Right ventricle myocardium inferior (tissue), 1 donor: ENCODE measurements at regions of chr5 and their contacts with region 1.

Region 1: DNA sequence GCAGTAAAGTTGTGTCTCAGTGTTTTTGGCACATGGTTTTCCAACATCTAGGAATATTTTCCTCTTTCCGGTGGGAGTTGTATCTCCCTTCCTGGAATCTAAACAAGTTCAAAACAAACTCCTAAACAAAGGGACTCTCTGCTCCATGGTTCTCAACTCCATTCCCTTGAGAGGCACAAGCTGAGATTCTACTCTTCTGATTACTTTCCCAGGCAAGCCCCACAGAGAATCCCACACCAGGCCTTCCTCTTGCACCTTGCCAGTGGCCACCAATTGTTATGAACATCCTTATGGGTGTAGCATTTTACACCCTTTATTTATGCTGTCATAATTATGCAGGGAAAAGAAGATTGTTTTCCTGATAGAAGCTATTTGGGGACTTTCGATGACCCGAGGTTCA is 25.8 kb upstream of the SH3TC2 start:
- DNase-seq: no peak
- ATAC-seq: no peak

Region 2: GRCh38 chr5:148750614-148751013 is 338.1 kb before region 1 on chr5:
- intact Hi-C with region 1: no loop called
- DNase-seq: no peak
- ATAC-seq: no peak

Region 3: DNA sequence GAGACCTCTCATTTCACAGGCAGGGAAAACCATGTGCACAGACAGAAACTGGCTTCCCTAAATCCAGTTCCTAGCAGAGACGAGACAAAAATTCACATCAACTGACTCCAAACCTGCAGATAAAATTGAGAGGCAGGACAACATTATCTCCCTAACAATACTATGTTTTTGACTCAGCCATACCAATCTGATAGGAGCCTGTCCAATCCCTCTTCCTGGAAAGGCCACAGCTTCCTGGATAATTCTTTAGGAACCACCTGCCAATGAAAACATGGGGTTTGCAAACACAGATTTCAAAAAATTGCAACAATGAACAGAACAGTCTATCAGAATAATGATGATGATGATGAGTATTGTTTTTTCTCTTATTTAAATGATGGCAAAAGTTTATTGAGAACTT is 48.3 kb before region 1 on chr5:
- intact Hi-C with region 1: loop called (anchors 2 kb)
- DNase-seq: no peak
- ATAC-seq: no peak

Region 4: GRCh38 chr5:149063017-149063687 is 25.5 kb before region 1 on chr5 and contains the start of gene SH3TC2:
- intact Hi-C with region 1: loop called (anchors 2 kb)
- DNase-seq: peak; percentile 86
- ATAC-seq: peak; percentile 89
- total RNA-seq, gene SH3TC2: 14.6 TPM

Region 5: DNA sequence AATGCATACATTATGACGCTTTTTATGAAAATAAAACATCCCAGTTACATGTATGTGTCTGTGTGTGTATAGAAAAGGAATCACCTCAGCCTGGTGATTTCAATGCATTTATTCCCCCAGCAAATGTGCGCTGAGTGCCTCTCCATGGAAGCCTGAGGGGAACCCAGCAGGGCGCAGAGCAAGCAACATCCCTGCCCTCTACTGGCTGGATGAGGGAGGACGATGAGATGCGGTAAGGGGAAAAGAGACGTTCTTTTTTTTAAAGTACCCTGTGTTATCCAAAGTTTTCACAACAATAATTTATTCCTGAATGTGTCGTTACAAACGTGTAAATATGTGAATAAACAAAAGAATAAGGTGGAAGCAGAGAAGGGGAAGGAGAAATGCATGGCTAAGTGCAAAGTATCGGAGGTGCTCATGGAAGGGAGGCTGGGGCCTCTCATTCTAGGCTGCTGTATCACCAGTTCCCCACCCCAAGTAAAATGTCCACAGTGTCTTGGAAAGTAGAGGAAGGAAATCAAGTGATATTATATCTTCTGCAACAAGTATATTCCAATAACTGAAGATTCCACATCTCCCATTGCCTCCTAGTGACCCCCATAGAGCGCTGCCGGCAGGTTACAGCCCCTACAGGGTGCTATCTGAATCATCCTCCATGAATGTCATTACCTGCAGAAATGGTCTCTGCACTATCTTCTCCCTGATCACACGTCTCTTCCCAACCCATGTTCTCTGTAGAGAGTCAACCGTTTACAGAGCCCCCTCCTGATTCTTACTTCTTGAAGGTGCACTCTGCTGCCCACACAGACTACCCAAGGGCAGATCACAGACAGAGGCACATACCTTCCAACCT is 39.6 kb after region 1 on chr5:
- intact Hi-C with region 1: no loop called
- DNase-seq: no peak
- ATAC-seq: peak; percentile 45

Region 6: GRCh38 chr5:149434162-149435014 is 345.7 kb after region 1 on chr5:
- intact Hi-C with region 1: no loop called
- DNase-seq: peak; percentile 69
- ATAC-seq: peak; percentile 27

Region 7: GRCh38 chr5:150599917-150600499 is 1511.3 kb after region 1 on chr5:
- intact Hi-C with region 1: no loop called
- DNase-seq: peak; percentile 90
- ATAC-seq: peak; percentile 53